Sciatic nerve (tissue), 2 donors: ENCODE measurements at regions of chr7 and their contacts with region 1.

Region 1: DNA sequence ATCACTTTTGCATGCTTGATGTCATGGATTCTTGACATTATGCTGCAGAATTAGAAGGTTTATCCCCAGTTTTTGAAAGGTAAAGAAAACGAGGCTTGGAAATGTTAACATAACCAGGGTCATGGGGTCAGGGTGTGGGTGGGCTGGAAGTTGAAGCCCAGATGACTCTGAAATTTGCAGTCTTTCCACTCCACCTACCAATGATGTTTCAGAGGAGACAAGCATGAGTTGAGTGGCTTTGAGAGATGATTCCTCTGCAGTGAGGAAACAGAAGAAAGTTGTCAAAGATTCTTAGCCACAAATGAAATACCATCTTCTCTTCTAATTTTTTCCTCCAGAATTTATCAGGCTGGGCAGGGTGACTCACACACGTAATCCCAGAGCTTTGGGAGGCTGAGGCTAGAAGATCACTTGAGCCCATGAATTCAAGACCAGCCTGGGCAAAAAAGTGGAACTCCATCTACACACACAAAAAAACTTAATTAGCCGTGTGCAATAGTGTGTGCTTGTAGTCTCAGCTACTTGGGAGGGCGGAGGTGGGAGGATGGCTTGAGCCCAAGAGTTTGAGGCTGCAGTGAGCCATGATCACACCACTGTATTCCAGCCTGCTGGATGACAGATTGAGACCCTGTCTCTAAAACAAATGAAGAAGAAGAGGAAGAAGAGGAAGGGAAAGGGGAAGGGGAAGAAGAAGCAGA is 239.1 kb upstream of the AUTS2 start:
- DNase-seq: no peak
- ATAC-seq: no peak

Region 2: GRCh38 chr7:70557338-70557737 is 1198.2 kb after region 1 on chr7:
- intact Hi-C with region 1: loop called (anchors 5 kb)
- DNase-seq: no peak
- ATAC-seq: no peak